ENCODE measurements at regions of chr2 and their contacts with region 1.

Region 1: GRCh38 chr2:24792874-24793760 is at the starts of genes CENPO and PTRHD1:
- DNase-seq: peak; percentile 98 to 99
- H3K4me3 ChIP-seq: peak within 1 kb of the TSS; percentile 78
- H3K4me3 Mint-ChIP-seq: peak within 1 kb of the TSS; percentile 95
- H3K27ac Mint-ChIP-seq: peak within 1 kb of the TSS; percentile 99
- H3K4me1 ChIP-seq: peaks cover 24% of the 10 kb centered on the region
- H3K4me1 Mint-ChIP-seq: peaks cover 27% of the 10 kb centered on the region
- H3K27me3 ChIP-seq: no peaks in the 10 kb centered on the region
- H3K27me3 Mint-ChIP-seq: no peaks in the 10 kb centered on the region
- CTCF ChIP-seq: peak; percentile 82 to 92
- total RNA-seq, gene CENPO: 54.8 and 58.3 TPM in 2 replicates
- total RNA-seq, gene PTRHD1: 49.4 and 52.8 TPM in 2 replicates

Region 2: DNA sequence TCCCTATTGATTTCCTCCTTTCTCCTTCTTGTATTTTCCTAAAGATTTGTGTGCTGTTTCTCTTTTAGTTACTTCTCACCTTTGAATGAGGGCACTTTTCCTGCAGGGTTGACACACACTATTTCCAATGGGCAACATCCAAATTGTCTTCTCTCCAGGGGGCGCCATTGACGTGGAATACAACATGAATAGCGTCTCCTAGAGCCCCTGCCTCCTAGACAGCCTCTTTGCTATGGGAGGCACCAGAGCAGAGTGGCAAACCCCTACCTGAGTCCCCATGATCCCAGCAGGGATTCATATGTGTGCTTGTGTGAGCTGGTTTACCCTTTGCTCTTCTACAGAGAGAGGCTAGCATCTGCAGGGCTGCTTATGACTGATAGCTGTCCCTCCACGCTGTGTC is 371.4 kb before region 1 on chr2:
- CTCF ChIA-PET with region 1: interaction called, 6 read pairs
- POLR2A ChIA-PET with region 1: no interaction called
- intact Hi-C with region 1: loop called (anchors 1 kb)
- DNase-seq: peak; percentile 78 to 82
- H3K4me3 ChIP-seq: no peak overlapping the region
- H3K4me3 Mint-ChIP-seq: no peak overlapping the region
- H3K27ac Mint-ChIP-seq: no peak overlapping the region
- H3K4me1 ChIP-seq: peaks cover 13% of the 10 kb centered on the region
- H3K4me1 Mint-ChIP-seq: peaks cover 9% of the 10 kb centered on the region
- H3K27me3 ChIP-seq: no peaks in the 10 kb centered on the region
- H3K27me3 Mint-ChIP-seq: no peaks in the 10 kb centered on the region
- CTCF ChIP-seq: peak; percentile 58 to 60

Region 3: GRCh38 chr2:24722141-24722790 is 70.9 kb before region 1 on chr2:
- CTCF ChIA-PET with region 1: no interaction called
- POLR2A ChIA-PET with region 1: interaction called, 4 read pairs
- intact Hi-C with region 1: loop called (anchors 2 kb)
- DNase-seq: no peak
- H3K4me3 ChIP-seq: no peak overlapping the region
- H3K4me3 Mint-ChIP-seq: no peak overlapping the region
- H3K27ac Mint-ChIP-seq: peak overlapping the region; percentile 67
- H3K4me1 ChIP-seq: peaks cover 11% of the 10 kb centered on the region
- H3K4me1 Mint-ChIP-seq: peaks cover 14% of the 10 kb centered on the region
- H3K27me3 ChIP-seq: no peaks in the 10 kb centered on the region
- H3K27me3 Mint-ChIP-seq: no peaks in the 10 kb centered on the region
- CTCF ChIP-seq: no peak

Region 4: DNA sequence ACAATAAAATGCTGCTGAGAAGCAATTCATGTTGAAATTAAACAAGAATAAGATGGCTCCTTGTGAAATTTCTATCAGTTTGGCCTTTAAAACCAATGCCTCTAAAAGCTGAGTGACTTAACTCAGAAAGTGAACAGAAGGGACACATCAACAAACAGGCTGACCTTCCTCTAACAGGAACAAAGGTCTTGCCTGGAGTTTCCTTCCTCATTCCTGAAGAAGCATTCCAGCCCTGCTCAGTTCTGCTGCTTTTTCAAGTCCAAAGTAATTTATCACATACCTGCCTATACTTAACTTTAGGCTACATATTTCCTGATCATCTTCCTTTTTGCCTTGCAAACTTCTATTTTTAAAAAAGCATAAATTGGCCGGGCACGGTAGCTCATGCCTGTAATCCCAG is 14.0 kb before region 1 on chr2:
- CTCF ChIA-PET with region 1: interaction called, 13 read pairs
- POLR2A ChIA-PET with region 1: interaction called, 5 read pairs
- intact Hi-C with region 1: loop called (anchors 1 kb)
- DNase-seq: peak; percentile 58 to 68
- H3K4me3 ChIP-seq: no peak overlapping the region
- H3K4me3 Mint-ChIP-seq: no peak overlapping the region
- H3K27ac Mint-ChIP-seq: peak overlapping the region; percentile 20
- H3K4me1 ChIP-seq: peaks cover 23% of the 10 kb centered on the region
- H3K4me1 Mint-ChIP-seq: peaks cover 23% of the 10 kb centered on the region
- H3K27me3 ChIP-seq: no peaks in the 10 kb centered on the region
- H3K27me3 Mint-ChIP-seq: no peaks in the 10 kb centered on the region
- CTCF ChIP-seq: no peak

Region 5: GRCh38 chr2:24827321-24828237 is 34.5 kb after region 1 on chr2:
- CTCF ChIA-PET with region 1: interaction called, 30 read pairs
- POLR2A ChIA-PET with region 1: interaction called, 3 read pairs
- intact Hi-C with region 1: loop called (anchors 1 kb)
- DNase-seq: peak; percentile 85 to 86
- H3K4me3 ChIP-seq: no peak overlapping the region
- H3K4me3 Mint-ChIP-seq: no peak overlapping the region
- H3K27ac Mint-ChIP-seq: peak overlapping the region; percentile 22
- H3K4me1 ChIP-seq: no peaks in the 10 kb centered on the region
- H3K4me1 Mint-ChIP-seq: peaks cover 8% of the 10 kb centered on the region
- H3K27me3 ChIP-seq: no peaks in the 10 kb centered on the region
- H3K27me3 Mint-ChIP-seq: no peaks in the 10 kb centered on the region
- CTCF ChIP-seq: peak; percentile 89 to 94

Measured in Caco-2 (cell line).